Left colon (tissue), 2 donors: ENCODE measurements at regions of chr3 and their contacts with region 1.

Region 1: DNA sequence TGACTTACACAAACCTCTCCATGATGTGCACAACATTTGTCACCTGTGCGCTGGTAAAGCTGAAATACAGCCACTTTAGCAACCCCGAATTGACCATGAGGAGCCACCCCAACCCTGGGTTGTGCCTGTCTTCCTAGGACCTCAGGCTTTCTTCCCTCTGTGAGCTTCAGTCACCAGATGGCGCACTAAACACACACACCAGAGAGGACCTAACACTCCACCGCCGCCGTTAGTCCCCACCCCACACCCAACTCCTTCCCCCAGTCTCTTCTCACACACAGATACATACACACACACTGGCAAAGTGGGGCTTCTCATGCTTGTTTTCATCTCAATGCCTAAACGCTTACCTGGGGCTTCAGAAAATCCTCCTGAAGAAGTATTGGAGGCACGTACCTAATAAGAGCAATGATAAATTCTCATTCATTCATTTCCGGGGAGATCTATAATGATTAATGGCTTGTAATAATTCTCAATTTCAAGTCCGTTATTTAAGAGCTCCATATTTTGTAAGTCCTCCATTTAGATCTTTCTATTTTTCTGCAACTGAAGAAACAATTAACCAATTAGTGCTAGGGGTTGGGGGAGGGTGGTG is 2.1 kb upstream of the CCDC80 start:
- DNase-seq: peak; percentile 78 to 83
- ATAC-seq: peak; percentile 90

Region 2: GRCh38 chr3:112794622-112795172 is 151.7 kb after region 1 on chr3:
- intact Hi-C with region 1: no loop called
- DNase-seq: no peak
- ATAC-seq: no peak

Region 3: GRCh38 chr3:112814266-112814665 is 171.3 kb after region 1 on chr3:
- intact Hi-C with region 1: loop called in 1 of 2 experiments (anchors 5 kb)
- DNase-seq: no peak
- ATAC-seq: peak; percentile 40

Region 4: DNA sequence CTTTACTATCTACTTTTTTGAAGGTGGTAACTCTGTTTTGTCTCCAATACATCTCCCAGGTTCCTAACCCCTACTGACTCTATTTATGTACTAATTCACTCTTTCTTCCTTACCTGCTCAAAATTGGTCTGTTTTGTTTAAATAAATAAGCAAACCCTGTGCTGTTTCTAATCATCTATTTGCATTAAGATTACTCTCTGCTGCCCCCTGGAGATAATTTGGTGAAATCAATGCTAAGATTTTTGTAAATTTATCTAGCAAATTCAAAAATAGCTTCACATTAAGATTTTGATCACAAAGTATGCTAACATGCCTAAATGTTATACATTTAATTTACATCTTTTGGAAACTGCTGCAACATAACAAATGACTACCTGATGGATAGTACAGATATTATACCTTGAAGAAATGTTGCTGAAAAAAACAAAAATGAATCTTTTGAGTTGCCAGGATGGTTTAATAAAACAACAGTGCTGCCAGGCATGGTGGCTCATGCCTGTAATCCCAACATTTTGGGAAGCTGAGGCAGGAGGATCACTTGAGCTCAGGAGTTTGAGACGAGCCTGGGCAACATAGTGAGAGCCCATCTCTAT is 336.3 kb after region 1 on chr3:
- intact Hi-C with region 1: loop called in 1 of 2 experiments (anchors 5 kb)
- DNase-seq: no peak
- ATAC-seq: no peak